ENCODE measurements at regions of chr3 and their contacts with region 1.

Region 1: GRCh38 chr3:150495563-150496168 is 50.6 kb downstream of the SERP1 start:
- DNase-seq: peak in 7 of 9 donors; percentile 9 to 59 (median 41)
- ATAC-seq: peak; percentile 73
- H3K4me3 ChIP-seq: no peak overlapping the region
- H3K4me3 Mint-ChIP-seq: no peak overlapping the region
- H3K27ac ChIP-seq: no peak overlapping the region
- H3K27ac Mint-ChIP-seq: no peak overlapping the region
- H3K4me1 ChIP-seq: no peaks in the 10 kb centered on the region
- H3K4me1 Mint-ChIP-seq: peaks cover 0 to 6% (median 0%) of the 10 kb centered on the region in 7 donors
- H3K27me3 ChIP-seq: no peaks in the 10 kb centered on the region
- H3K27me3 Mint-ChIP-seq: peaks cover 0 to 9% (median 0%) of the 10 kb centered on the region in 5 donors

Region 2: DNA sequence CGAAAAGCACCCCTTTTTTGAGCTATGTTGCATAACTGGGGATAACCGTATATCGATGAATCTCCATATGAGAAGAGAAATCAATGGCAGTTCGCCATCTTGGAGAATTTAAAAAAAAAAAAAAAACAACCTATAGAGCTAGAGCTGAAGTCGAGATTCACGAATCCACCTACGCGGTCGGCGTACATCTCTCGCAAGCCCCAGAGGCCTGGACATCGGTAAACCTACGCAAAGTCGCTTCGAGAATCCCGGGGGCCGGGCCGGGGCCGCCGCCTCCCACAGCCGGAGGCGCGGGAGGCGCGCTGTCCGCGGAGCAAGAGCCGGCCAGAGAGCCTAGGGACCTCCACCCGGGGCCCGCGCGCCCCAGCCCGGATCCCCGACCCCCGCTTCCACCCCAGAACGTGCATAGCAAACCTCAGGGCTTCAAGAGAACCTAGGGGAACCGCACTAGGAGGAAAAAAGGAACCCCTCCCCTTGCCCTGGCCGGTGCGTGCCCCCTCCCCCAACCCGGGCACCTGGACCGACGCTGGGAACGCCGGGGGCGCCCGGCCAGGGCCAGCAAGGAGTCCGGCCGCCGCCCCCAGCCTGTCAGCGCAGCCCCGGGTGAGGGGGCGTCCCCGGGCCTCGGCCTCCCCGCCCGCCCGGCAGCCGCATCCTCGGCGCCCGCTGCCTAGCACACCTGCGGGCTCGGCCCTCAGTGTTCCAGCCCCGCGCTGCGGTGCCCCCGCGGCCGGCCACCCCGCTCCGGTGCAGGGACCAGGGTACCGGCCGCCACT is 525.5 kb before region 1 on chr3:
- CTCF ChIA-PET with region 1: interaction called, 4 read pairs
- POLR2A ChIA-PET with region 1: no interaction called
- intact Hi-C with region 1: loop called (anchors 1 to 5 kb)
- DNase-seq: peak; percentile 54 to 81 (median 75)
- ATAC-seq: peak; percentile 64
- H3K4me3 ChIP-seq: peak overlapping the region; percentile 53
- H3K4me3 Mint-ChIP-seq: peak overlapping the region; percentile 85 to 96 (median 92)
- H3K27ac ChIP-seq: peak overlapping the region; percentile 63
- H3K27ac Mint-ChIP-seq: peak overlapping the region in 8 of 9 donors; percentile 60 to 94 (median 86)
- H3K4me1 ChIP-seq: peaks cover 0 to 4% of the 10 kb centered on the region in 2 donors
- H3K4me1 Mint-ChIP-seq: peaks cover 16 to 26% (median 20%) of the 10 kb centered on the region in 7 donors
- H3K27me3 ChIP-seq: peaks cover 0 to 5% of the 10 kb centered on the region in 2 donors
- H3K27me3 Mint-ChIP-seq: peaks cover 6 to 55% (median 26%) of the 10 kb centered on the region in 5 donors

Region 3: GRCh38 chr3:150049317-150049716 is 446.3 kb before region 1 on chr3:
- CTCF ChIA-PET with region 1: no interaction called
- POLR2A ChIA-PET with region 1: no interaction called
- intact Hi-C with region 1: no loop called
- DNase-seq: no peak
- ATAC-seq: no peak
- H3K4me3 ChIP-seq: no peak overlapping the region
- H3K4me3 Mint-ChIP-seq: no peak overlapping the region
- H3K27ac ChIP-seq: no peak overlapping the region
- H3K27ac Mint-ChIP-seq: no peak overlapping the region
- H3K4me1 ChIP-seq: no peaks in the 10 kb centered on the region
- H3K4me1 Mint-ChIP-seq: no peaks in the 10 kb centered on the region
- H3K27me3 ChIP-seq: no peaks in the 10 kb centered on the region
- H3K27me3 Mint-ChIP-seq: peaks cover 15 to 33% (median 21%) of the 10 kb centered on the region in 5 donors

Region 4: GRCh38 chr3:150220799-150221198 is 274.9 kb before region 1 on chr3:
- CTCF ChIA-PET with region 1: interaction called, 3 read pairs
- POLR2A ChIA-PET with region 1: no interaction called
- intact Hi-C with region 1: loop called in 1 of 2 experiments (anchors 1 kb)
- DNase-seq: no peak
- ATAC-seq: no peak
- H3K4me3 ChIP-seq: no peak overlapping the region
- H3K4me3 Mint-ChIP-seq: peak overlapping the region in 5 of 10 donors; percentile 6 to 71 (median 27)
- H3K27ac ChIP-seq: no peak overlapping the region
- H3K27ac Mint-ChIP-seq: no peak overlapping the region
- H3K4me1 ChIP-seq: no peaks in the 10 kb centered on the region
- H3K4me1 Mint-ChIP-seq: peaks cover 2 to 6% (median 4%) of the 10 kb centered on the region in 7 donors
- H3K27me3 ChIP-seq: no peaks in the 10 kb centered on the region
- H3K27me3 Mint-ChIP-seq: peaks cover 32 to 53% (median 42%) of the 10 kb centered on the region in 5 donors

Region 5: DNA sequence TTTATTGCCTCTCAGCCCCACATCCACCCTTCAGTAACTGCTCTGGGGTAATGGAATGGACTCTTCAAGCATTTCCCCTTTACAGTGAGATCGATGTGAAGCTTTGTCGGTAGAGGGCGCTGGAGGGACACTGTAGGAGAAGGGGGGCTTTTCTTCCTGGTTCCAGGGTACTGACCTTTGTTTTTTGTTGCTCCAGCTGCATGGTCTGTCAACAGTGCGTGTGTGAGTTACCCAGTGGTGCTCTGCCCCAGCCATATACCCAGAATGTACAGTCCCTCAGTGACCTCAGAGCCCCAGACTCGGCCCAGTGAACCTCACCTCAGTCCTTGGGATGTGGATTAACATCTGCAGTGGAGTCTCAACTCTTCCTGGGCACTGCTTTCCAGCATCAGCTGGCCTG is 267.8 kb before region 1 on chr3:
- CTCF ChIA-PET with region 1: interaction called, 3 read pairs
- POLR2A ChIA-PET with region 1: no interaction called
- intact Hi-C with region 1: loop called in 1 of 2 experiments (anchors 1 kb)
- DNase-seq: peak in 1 of 9 donors; percentile 25
- ATAC-seq: peak; percentile 26
- H3K4me3 ChIP-seq: no peak overlapping the region
- H3K4me3 Mint-ChIP-seq: no peak overlapping the region
- H3K27ac ChIP-seq: no peak overlapping the region
- H3K27ac Mint-ChIP-seq: no peak overlapping the region
- H3K4me1 ChIP-seq: no peaks in the 10 kb centered on the region
- H3K4me1 Mint-ChIP-seq: no peaks in the 10 kb centered on the region
- H3K27me3 ChIP-seq: no peaks in the 10 kb centered on the region
- H3K27me3 Mint-ChIP-seq: peaks cover 13 to 29% (median 22%) of the 10 kb centered on the region in 5 donors

Region 6: GRCh38 chr3:150286390-150287147 is 209.1 kb before region 1 on chr3:
- CTCF ChIA-PET with region 1: interaction called, 41 read pairs
- POLR2A ChIA-PET with region 1: no interaction called
- intact Hi-C with region 1: loop called (anchors 1 kb)
- DNase-seq: peak in 7 of 9 donors; percentile 17 to 61 (median 50)
- ATAC-seq: peak; percentile 72
- H3K4me3 ChIP-seq: no peak overlapping the region
- H3K4me3 Mint-ChIP-seq: no peak overlapping the region
- H3K27ac ChIP-seq: no peak overlapping the region
- H3K27ac Mint-ChIP-seq: no peak overlapping the region
- H3K4me1 ChIP-seq: no peaks in the 10 kb centered on the region
- H3K4me1 Mint-ChIP-seq: no peaks in the 10 kb centered on the region
- H3K27me3 ChIP-seq: no peaks in the 10 kb centered on the region
- H3K27me3 Mint-ChIP-seq: peaks cover 4 to 69% (median 14%) of the 10 kb centered on the region in 5 donors

Region 7: DNA sequence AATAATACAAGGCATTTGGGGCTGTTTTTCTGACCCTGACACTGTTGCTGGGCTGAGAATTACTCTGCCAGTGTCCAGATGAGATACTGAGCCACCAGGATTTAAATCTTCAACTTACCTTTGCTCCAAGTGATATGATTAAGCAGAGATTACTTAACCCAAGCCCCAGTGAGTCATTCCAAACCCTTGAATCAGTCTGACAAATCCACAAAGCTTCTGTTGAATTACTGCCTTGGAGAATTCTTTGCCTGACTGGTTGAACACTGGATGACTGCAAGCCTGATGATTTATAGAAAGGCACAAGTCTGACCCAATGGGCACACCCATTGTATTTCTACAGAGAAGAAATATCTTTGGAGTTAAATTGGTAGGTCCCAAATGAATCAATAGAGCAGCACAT is 175.8 kb before region 1 on chr3:
- CTCF ChIA-PET with region 1: no interaction called
- POLR2A ChIA-PET with region 1: no interaction called
- intact Hi-C with region 1: loop called in 1 of 2 experiments (anchors 10 kb)
- DNase-seq: no peak
- ATAC-seq: no peak
- H3K4me3 ChIP-seq: no peak overlapping the region
- H3K4me3 Mint-ChIP-seq: no peak overlapping the region
- H3K27ac ChIP-seq: no peak overlapping the region
- H3K27ac Mint-ChIP-seq: no peak overlapping the region
- H3K4me1 ChIP-seq: no peaks in the 10 kb centered on the region
- H3K4me1 Mint-ChIP-seq: no peaks in the 10 kb centered on the region
- H3K27me3 ChIP-seq: no peaks in the 10 kb centered on the region
- H3K27me3 Mint-ChIP-seq: peaks cover 5 to 30% (median 7%) of the 10 kb centered on the region in 5 donors

Region 8: DNA sequence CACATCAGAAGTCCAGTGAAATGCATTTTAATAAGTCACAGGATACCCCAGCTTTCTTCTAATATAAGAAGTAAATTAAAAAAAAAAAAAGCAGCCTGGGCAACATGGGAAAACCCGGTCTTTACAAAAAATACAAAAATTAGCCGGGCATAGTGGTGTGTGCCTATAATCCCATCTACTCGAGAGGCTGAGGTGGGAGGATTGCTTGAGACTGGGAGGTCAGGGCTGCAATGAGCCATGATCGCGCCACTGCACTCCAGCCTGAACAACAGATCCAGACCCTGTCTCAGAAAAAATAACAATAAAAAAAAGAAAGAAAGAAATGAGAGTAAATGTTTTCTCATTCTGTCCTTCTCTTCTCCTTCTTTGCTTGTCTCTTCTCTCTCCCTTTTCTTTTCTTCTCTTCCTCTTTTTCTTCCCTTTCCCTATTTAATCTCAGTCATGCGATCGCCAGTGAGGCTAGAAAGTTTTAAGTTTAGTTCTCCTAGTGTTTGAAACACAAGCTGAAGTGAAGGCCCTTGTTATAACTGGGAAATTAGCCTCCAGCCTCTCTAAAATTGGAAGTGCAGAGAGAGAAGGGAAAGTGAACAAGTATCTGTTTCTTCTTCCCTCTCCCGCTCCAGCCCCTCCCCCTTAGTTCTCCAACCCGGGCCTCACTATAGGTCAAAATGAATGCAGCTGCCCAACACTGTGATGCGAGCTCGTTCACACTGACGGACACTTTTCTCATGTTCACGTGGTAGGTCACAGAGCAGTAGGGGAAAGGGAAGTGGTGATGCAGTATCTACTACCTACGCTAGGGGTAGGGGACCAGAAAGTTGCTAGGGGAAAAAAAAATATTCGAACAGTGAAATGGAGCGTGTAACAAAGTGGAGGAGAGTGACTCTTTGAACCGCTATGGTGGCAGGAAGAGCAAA is 111.1 kb before region 1 on chr3:
- CTCF ChIA-PET with region 1: interaction called, 3 read pairs
- POLR2A ChIA-PET with region 1: no interaction called
- intact Hi-C with region 1: loop called in 1 of 2 experiments (anchors 1 kb)
- DNase-seq: peak in 8 of 9 donors; percentile 47 to 70 (median 61)
- ATAC-seq: peak; percentile 96
- H3K4me3 ChIP-seq: peak overlapping the region; percentile 46
- H3K4me3 Mint-ChIP-seq: peak overlapping the region; percentile 56 to 88 (median 80)
- H3K27ac ChIP-seq: peak overlapping the region; percentile 42
- H3K27ac Mint-ChIP-seq: peak overlapping the region; percentile 22 to 85 (median 64)
- H3K4me1 ChIP-seq: peaks cover 7 to 8% of the 10 kb centered on the region in 2 donors
- H3K4me1 Mint-ChIP-seq: peaks cover 17 to 34% (median 20%) of the 10 kb centered on the region in 7 donors
- H3K27me3 ChIP-seq: no peaks in the 10 kb centered on the region
- H3K27me3 Mint-ChIP-seq: peaks cover 0 to 2% (median 0%) of the 10 kb centered on the region in 5 donors

Measured in naive thymus-derived CD4-positive, alpha-beta T cell (primary cell).